B cell (primary cell): ENCODE measurements at regions of chr11 and their contacts with region 1.

Region 1: GRCh38 chr11:59216641-59217564 is 4.2 kb upstream of the MPEG1 start:
- DNase-seq: peak; percentile 95
- ATAC-seq: peak; percentile 72
- H3K4me3 ChIP-seq: peak overlapping the region in 4 of 5 experiments; percentile 12 to 46 (median 16)
- H3K4me3 Mint-ChIP-seq: peak overlapping the region; percentile 78
- H3K27ac ChIP-seq: peak overlapping the region; percentile 82 to 94
- H3K27ac Mint-ChIP-seq: peak overlapping the region; percentile 95
- H3K4me1 ChIP-seq: peaks cover 93 to 94% of the 10 kb centered on the region in 2 donors
- H3K4me1 Mint-ChIP-seq: peaks cover 96% of the 10 kb centered on the region
- H3K27me3 ChIP-seq: no peaks in the 10 kb centered on the region
- H3K27me3 Mint-ChIP-seq: no peaks in the 10 kb centered on the region
- CTCF ChIP-seq: no peak

Region 2: GRCh38 chr11:59106363-59107336 is 110.3 kb before region 1 on chr11 and contains the start of gene FAM111B:
- CTCF ChIA-PET with region 1: interaction called, 3 read pairs
- POLR2A ChIA-PET with region 1: no interaction called
- intact Hi-C with region 1: loop called (anchors 5 kb)
- DNase-seq: peak; percentile 73
- ATAC-seq: peak; percentile 48
- H3K4me3 ChIP-seq: peak within 1 kb of the TSS; percentile 47 to 79 (median 61)
- H3K4me3 Mint-ChIP-seq: peak within 1 kb of the TSS; percentile 94
- H3K27ac ChIP-seq: peak within 1 kb of the TSS; percentile 25 to 59
- H3K27ac Mint-ChIP-seq: peak within 1 kb of the TSS; percentile 93
- H3K4me1 ChIP-seq: peaks cover 64 to 72% of the 10 kb centered on the region in 2 donors
- H3K4me1 Mint-ChIP-seq: peaks cover 83% of the 10 kb centered on the region
- H3K27me3 ChIP-seq: no peaks in the 10 kb centered on the region
- H3K27me3 Mint-ChIP-seq: no peaks in the 10 kb centered on the region
- CTCF ChIP-seq: no peak
- total RNA-seq, gene FAM111B: 148 and 155 TPM in 2 replicates

Region 3: DNA sequence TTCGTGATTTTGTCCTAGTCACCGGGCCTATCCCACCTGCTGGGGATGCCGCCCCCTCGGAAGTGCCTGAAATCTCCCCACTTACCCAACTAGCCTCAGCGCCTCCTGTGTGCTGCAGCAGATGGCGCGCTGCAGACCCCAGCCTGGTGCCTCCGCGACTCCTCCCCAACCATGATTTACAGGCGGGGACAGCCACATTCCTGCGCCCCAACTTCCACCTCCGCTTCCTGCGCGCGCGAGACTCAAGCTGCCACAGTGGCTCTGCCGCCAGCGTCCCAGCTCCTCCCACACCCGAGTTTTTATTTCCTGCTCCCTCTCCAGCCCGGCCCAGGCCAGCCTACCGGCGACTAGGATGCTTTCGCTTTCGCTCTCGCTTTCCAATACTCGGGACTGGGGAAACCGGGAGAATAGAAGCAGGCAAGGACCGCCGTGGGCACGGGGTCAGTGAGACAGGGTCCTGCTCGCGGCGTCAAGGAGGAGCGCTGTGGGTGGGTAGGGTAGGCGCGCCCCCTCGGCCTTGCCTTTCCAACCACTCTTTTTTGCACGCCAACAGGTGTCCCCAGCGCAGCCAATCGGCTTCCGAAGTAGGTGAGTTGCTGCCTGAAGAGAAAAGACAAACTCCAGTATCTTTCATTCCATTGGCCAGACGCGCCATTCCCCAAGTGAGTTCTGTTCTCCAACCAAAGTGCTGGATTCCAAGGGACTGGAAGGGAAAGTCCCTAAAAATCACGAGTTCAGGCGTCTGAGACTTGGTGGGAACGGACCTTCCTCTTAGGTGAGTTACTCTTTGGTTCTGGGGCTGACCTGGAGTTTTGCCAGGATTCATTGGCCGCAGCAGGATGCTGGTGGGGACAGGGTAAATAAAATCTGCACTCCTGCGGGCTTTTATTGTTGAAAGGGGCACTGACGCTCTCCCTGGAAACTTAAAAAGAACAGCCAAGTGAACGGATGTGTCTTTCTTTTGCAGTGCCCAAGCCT is 74.1 kb before region 1 on chr11 and contains the start of gene FAM111A:
- CTCF ChIA-PET with region 1: no interaction called
- POLR2A ChIA-PET with region 1: no interaction called
- intact Hi-C with region 1: loop called (anchors 2 kb)
- DNase-seq: peak; percentile 91
- ATAC-seq: peak; percentile 74
- H3K4me3 ChIP-seq: peak within 1 kb of the TSS; percentile 82 to 94 (median 89)
- H3K4me3 Mint-ChIP-seq: peak within 1 kb of the TSS; percentile 97
- H3K27ac ChIP-seq: peak within 1 kb of the TSS; percentile 88 to 90
- H3K27ac Mint-ChIP-seq: peak within 1 kb of the TSS; percentile 87
- H3K4me1 ChIP-seq: peaks cover 40 to 45% of the 10 kb centered on the region in 2 donors
- H3K4me1 Mint-ChIP-seq: peaks cover 68% of the 10 kb centered on the region
- H3K27me3 ChIP-seq: no peaks in the 10 kb centered on the region
- H3K27me3 Mint-ChIP-seq: no peaks in the 10 kb centered on the region
- CTCF ChIP-seq: no peak
- total RNA-seq, gene FAM111A: 120 and 126 TPM in 2 replicates

Region 4: DNA sequence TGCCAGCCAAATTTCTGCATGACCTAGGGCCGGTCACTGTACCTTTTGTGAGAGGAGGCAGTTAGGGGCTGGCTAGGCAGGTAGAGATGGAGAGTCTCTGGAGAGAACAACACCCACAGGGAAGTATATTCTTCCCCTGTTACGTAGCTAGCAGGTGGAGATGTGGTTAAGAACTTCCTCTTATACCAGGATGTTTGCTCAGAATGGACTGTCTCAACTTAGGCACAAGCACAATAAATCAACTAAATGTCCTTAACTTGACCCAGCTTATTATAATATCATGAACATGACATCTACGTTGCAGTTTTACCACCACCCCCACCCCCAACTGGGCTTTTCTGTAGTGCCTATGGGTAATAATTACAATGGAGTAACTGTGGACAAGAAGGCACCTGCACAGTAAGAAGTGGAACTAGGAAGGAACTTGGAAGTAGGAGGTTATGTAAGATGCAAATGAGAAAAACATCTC is 56.5 kb after region 1 on chr11:
- CTCF ChIA-PET with region 1: interaction called, 32 read pairs
- POLR2A ChIA-PET with region 1: interaction called, 15 read pairs
- intact Hi-C with region 1: loop called (anchors 1 kb)
- DNase-seq: peak; percentile 88
- ATAC-seq: peak; percentile 85
- H3K4me3 ChIP-seq: peak overlapping the region in 1 of 5 experiments; percentile 44
- H3K4me3 Mint-ChIP-seq: peak overlapping the region; percentile 83
- H3K27ac ChIP-seq: peak overlapping the region; percentile 90 to 94
- H3K27ac Mint-ChIP-seq: peak overlapping the region; percentile 95
- H3K4me1 ChIP-seq: peaks cover 76 to 85% of the 10 kb centered on the region in 2 donors
- H3K4me1 Mint-ChIP-seq: peaks cover 92% of the 10 kb centered on the region
- H3K27me3 ChIP-seq: no peaks in the 10 kb centered on the region
- H3K27me3 Mint-ChIP-seq: no peaks in the 10 kb centered on the region
- CTCF ChIP-seq: no peak

Region 5: DNA sequence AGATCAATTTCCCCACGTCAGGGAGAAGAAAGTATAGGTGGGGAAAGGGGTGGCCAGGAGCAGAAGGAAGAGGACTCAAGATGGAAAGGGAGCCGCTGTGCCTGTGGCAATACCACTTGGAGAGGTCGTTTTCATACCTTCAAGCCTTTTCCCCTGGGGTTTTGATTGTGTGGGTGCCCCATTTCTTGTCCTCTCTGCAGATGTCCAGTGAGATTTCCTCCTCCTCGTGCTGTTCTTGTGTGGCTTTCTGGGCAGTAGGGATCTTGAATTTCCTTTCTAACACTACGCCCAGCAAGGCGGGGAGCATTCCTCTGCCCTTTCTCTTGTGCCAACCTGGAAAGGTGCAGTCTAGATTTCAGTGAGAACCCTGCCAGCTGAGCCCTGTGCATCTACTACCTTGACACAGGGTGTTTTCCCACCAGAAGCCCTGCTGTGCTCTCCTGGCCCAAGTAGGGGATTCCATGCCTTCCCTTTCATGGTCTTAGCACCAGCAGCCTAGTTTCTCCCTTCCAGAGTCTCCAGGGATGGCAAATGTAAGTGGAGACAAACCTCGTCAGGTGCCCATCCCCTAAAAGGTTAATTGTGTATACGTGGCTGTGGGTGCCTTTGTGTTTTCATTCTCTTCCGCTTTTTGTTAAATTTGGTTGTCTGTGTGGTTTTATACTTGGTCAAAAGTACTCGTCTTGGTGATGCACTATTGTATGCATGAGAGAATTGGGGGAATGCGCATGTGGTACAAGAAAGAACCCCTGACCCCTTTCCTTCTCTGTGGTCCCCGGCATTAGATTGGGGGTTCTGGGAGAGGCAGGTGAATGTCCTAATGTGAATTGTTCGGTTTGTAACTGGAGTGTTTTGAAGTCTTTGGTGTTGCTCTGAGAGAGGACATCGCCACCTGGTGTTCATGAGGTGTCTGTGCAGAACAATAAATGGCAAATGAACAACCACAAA is 67.2 kb after region 1 on chr11:
- CTCF ChIA-PET with region 1: interaction called, 4 read pairs
- POLR2A ChIA-PET with region 1: interaction called, 3 read pairs
- intact Hi-C with region 1: loop called (anchors 1 kb)
- DNase-seq: peak; percentile 92
- ATAC-seq: peak; percentile 83
- H3K4me3 ChIP-seq: peak overlapping the region in 4 of 5 experiments; percentile 25 to 49 (median 34)
- H3K4me3 Mint-ChIP-seq: peak overlapping the region; percentile 80
- H3K27ac ChIP-seq: peak overlapping the region; percentile 75 to 89
- H3K27ac Mint-ChIP-seq: peak overlapping the region; percentile 91
- H3K4me1 ChIP-seq: peaks cover 30 to 51% of the 10 kb centered on the region in 2 donors
- H3K4me1 Mint-ChIP-seq: peaks cover 63% of the 10 kb centered on the region
- H3K27me3 ChIP-seq: no peaks in the 10 kb centered on the region
- H3K27me3 Mint-ChIP-seq: no peaks in the 10 kb centered on the region
- CTCF ChIP-seq: peak; percentile 89